Activated B cell treated with CpG ODN at 0.5 μM for 24 hours (primary cell): ENCODE measurements at regions of chr9 and their contacts with region 1.

Region 1: GRCh38 chr9:36102742-36103495 is 33.6 kb upstream of the GLIPR2 start:
- DNase-seq: peak; percentile 68
- ATAC-seq: peak; percentile 100
- H3K4me3 Mint-ChIP-seq: no peak overlapping the region
- H3K27ac Mint-ChIP-seq: no peak overlapping the region
- H3K4me1 Mint-ChIP-seq: peaks cover 2% of the 10 kb centered on the region
- H3K27me3 Mint-ChIP-seq: no peaks in the 10 kb centered on the region
- CTCF ChIP-seq: peak; percentile 61

Region 2: GRCh38 chr9:35954942-35955546 is 147.9 kb before region 1 on chr9:
- CTCF ChIA-PET with region 1: no interaction called
- POLR2A ChIA-PET with region 1: no interaction called
- intact Hi-C with region 1: loop called (anchors 1 kb)
- DNase-seq: no peak
- ATAC-seq: peak; percentile 75
- H3K4me3 Mint-ChIP-seq: no peak overlapping the region
- H3K27ac Mint-ChIP-seq: no peak overlapping the region
- H3K4me1 Mint-ChIP-seq: no peaks in the 10 kb centered on the region
- H3K27me3 Mint-ChIP-seq: peaks cover 22% of the 10 kb centered on the region
- CTCF ChIP-seq: peak; percentile 86

Region 3: GRCh38 chr9:35981699-35982098 is 121.2 kb before region 1 on chr9:
- CTCF ChIA-PET with region 1: no interaction called
- POLR2A ChIA-PET with region 1: no interaction called
- intact Hi-C with region 1: no loop called
- DNase-seq: no peak
- ATAC-seq: no peak
- H3K4me3 Mint-ChIP-seq: no peak overlapping the region
- H3K27ac Mint-ChIP-seq: no peak overlapping the region
- H3K4me1 Mint-ChIP-seq: peaks cover 7% of the 10 kb centered on the region
- H3K27me3 Mint-ChIP-seq: peaks cover 27% of the 10 kb centered on the region
- CTCF ChIP-seq: no peak

Region 4: GRCh38 chr9:36078051-36078450 is 24.9 kb before region 1 on chr9:
- CTCF ChIA-PET with region 1: no interaction called
- POLR2A ChIA-PET with region 1: no interaction called
- intact Hi-C with region 1: no loop called
- DNase-seq: no peak
- ATAC-seq: no peak
- H3K4me3 Mint-ChIP-seq: no peak overlapping the region
- H3K27ac Mint-ChIP-seq: no peak overlapping the region
- H3K4me1 Mint-ChIP-seq: no peaks in the 10 kb centered on the region
- H3K27me3 Mint-ChIP-seq: no peaks in the 10 kb centered on the region
- CTCF ChIP-seq: no peak

Region 5: DNA sequence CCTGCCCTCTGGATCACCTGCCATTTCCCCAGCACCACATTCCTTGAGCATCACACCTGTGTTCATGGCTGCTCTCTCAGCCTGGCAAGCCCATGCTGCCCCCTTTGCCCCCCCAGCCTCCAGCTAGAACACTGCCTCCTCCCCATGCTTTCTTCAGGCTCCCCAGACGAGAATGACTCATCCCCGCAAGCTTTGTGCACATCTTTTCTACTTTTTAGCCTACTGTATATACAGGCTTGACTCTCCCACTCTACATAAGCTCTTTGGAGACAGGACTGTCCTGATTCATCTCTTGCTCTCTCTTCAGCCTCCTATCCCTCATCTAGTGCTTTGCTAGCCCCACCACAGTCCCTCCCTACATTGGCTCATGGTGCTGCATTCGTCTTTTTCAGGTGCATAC is 13.7 kb after region 1 on chr9:
- CTCF ChIA-PET with region 1: interaction called, 19 read pairs
- POLR2A ChIA-PET with region 1: no interaction called
- intact Hi-C with region 1: no loop called
- DNase-seq: no peak
- ATAC-seq: no peak
- H3K4me3 Mint-ChIP-seq: no peak overlapping the region
- H3K27ac Mint-ChIP-seq: no peak overlapping the region
- H3K4me1 Mint-ChIP-seq: no peaks in the 10 kb centered on the region
- H3K27me3 Mint-ChIP-seq: no peaks in the 10 kb centered on the region
- CTCF ChIP-seq: no peak

Region 6: GRCh38 chr9:36142510-36143244 is 39.8 kb after region 1 on chr9:
- CTCF ChIA-PET with region 1: interaction called, 10 read pairs
- POLR2A ChIA-PET with region 1: no interaction called
- intact Hi-C with region 1: loop called (anchors 1 kb)
- DNase-seq: no peak
- ATAC-seq: peak; percentile 52
- H3K4me3 Mint-ChIP-seq: peak overlapping the region; percentile 94
- H3K27ac Mint-ChIP-seq: peak overlapping the region; percentile 100
- H3K4me1 Mint-ChIP-seq: peaks cover 95% of the 10 kb centered on the region
- H3K27me3 Mint-ChIP-seq: no peaks in the 10 kb centered on the region
- CTCF ChIP-seq: no peak

Region 7: GRCh38 chr9:36190388-36191287 is 87.7 kb after region 1 on chr9 and contains the start of gene CLTA:
- CTCF ChIA-PET with region 1: interaction called, 19 read pairs
- POLR2A ChIA-PET with region 1: no interaction called
- intact Hi-C with region 1: loop called (anchors 1 kb)
- DNase-seq: peak; percentile 84
- ATAC-seq: peak; percentile 98
- H3K4me3 Mint-ChIP-seq: peak within 1 kb of the TSS; percentile 95
- H3K27ac Mint-ChIP-seq: peak within 1 kb of the TSS; percentile 91
- H3K4me1 Mint-ChIP-seq: peaks cover 51% of the 10 kb centered on the region
- H3K27me3 Mint-ChIP-seq: no peaks in the 10 kb centered on the region
- CTCF ChIP-seq: no peak
- total RNA-seq, gene CLTA: 104 and 115 TPM in 2 replicates